Activated CD8-positive, alpha-beta T cell treated with anti-CD3 and anti-CD28 coated beads, Interleukin-2, amount 10 ng/mL, durations not matched to agents 7 days and 5 days (primary cell): ENCODE measurements at regions of chr3 and their contacts with region 1.

Region 1: GRCh38 chr3:51682079-51682478 is 11.0 kb downstream of the TEX264 start:
- DNase-seq: peak; percentile 91
- ATAC-seq: peak; percentile 81
- H3K4me3 Mint-ChIP-seq: peak overlapping the region; percentile 73
- H3K27ac Mint-ChIP-seq: peak overlapping the region; percentile 87
- H3K4me1 Mint-ChIP-seq: peaks cover 96% of the 10 kb centered on the region
- H3K27me3 Mint-ChIP-seq: no peaks in the 10 kb centered on the region

Region 2: DNA sequence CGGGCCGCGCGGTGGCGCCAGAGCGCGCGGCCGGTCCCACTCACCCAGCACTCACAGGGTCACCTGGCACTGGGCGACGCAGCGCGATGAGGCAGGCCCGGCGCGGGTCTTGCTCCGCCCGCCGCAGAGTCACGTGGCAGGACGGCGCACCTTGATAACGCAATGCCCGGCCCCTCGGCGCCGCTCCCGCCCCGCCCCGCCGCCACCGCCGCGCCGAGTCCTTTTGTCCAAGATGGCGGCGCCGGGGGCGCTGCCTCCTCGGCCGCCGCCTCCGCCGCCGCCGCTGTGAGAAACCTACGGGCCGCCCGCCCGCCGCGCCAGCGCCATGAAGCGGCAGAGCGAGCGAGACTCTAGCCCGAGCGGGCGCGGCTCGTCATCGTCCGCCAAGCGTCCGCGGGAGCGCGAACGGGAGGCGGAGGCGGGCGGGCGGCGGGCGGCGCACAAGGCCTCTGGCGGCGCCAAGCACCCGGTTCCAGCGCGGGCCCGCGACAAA is 291.0 kb before region 1 on chr3 and contains the start of gene RBM15B:
- CTCF ChIA-PET with region 1: interaction called, 28 read pairs
- POLR2A ChIA-PET with region 1: interaction called, 6 read pairs
- DNase-seq: peak; percentile 98
- ATAC-seq: peak; percentile 95
- H3K4me3 Mint-ChIP-seq: peak within 1 kb of the TSS; percentile 83
- H3K27ac Mint-ChIP-seq: peak within 1 kb of the TSS; percentile 94
- H3K4me1 Mint-ChIP-seq: peaks cover 79% of the 10 kb centered on the region
- H3K27me3 Mint-ChIP-seq: no peaks in the 10 kb centered on the region
- total RNA-seq, gene RBM15B: 30.7 to 30.8 TPM

Region 3: DNA sequence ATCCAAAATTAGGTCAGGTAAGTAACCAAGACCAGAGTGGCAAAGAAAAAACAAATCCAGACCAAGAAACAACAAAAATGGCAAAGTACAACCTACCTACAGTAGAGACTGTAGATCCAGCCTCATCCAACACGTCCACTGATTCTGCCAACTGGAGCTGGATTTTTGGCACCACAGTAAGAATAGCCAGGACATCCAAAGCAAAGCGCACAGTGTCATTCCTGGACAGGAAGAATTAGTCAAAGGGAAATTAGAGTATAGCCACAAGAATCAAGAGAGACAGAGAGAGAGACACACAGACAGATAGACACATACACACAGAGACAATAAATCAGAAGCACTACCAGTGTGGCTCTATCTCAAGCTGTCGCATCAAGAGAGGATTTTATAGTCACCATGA is 259.9 kb before region 1 on chr3:
- CTCF ChIA-PET with region 1: no interaction called
- POLR2A ChIA-PET with region 1: no interaction called
- DNase-seq: no peak
- ATAC-seq: no peak
- H3K4me3 Mint-ChIP-seq: no peak overlapping the region
- H3K27ac Mint-ChIP-seq: no peak overlapping the region
- H3K4me1 Mint-ChIP-seq: no peaks in the 10 kb centered on the region
- H3K27me3 Mint-ChIP-seq: no peaks in the 10 kb centered on the region

Region 4: GRCh38 chr3:51511000-51511399 is 171.1 kb before region 1 on chr3:
- CTCF ChIA-PET with region 1: interaction called, 15 read pairs
- POLR2A ChIA-PET with region 1: interaction called, 3 read pairs
- DNase-seq: no peak
- ATAC-seq: no peak
- H3K4me3 Mint-ChIP-seq: no peak overlapping the region
- H3K27ac Mint-ChIP-seq: no peak overlapping the region
- H3K4me1 Mint-ChIP-seq: peaks cover 23% of the 10 kb centered on the region
- H3K27me3 Mint-ChIP-seq: no peaks in the 10 kb centered on the region

Region 5: DNA sequence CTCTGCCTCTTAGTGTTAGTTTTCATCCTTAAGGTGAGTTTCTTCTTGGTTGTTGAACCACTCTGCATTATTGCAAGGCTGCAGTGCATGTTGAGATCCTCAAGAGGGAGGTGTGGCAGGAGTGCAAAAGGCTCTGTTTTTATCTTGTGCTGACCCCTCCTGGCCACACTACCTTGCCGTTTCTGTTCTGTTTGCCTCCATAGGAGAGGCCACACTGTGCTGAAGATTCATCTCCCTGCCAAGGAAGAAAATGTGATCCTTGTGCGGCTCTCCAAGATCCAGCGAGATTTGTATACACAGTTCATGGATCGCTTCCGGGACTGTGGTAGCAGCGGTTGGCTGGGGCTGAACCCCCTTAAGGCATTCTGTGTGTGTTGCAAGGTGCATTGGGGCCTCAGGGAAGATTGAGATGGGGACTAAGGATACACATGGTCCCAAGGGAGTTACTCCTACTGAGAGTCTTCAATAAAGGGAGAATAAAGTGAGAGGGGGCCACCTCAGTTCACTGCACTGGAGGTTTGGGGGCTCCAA is 44.1 kb before region 1 on chr3:
- CTCF ChIA-PET with region 1: interaction called, 92 read pairs
- POLR2A ChIA-PET with region 1: no interaction called
- DNase-seq: peak; percentile 69
- ATAC-seq: peak; percentile 82
- H3K4me3 Mint-ChIP-seq: no peak overlapping the region
- H3K27ac Mint-ChIP-seq: no peak overlapping the region
- H3K4me1 Mint-ChIP-seq: no peaks in the 10 kb centered on the region
- H3K27me3 Mint-ChIP-seq: no peaks in the 10 kb centered on the region

Region 6: GRCh38 chr3:51670823-51671733 is 11.0 kb before region 1 on chr3 and contains the start of gene TEX264:
- CTCF ChIA-PET with region 1: interaction called, 206 read pairs
- POLR2A ChIA-PET with region 1: interaction called, 28 read pairs
- DNase-seq: peak; percentile 94
- ATAC-seq: peak; percentile 80
- H3K4me3 Mint-ChIP-seq: peak within 1 kb of the TSS; percentile 88
- H3K27ac Mint-ChIP-seq: peak within 1 kb of the TSS; percentile 85
- H3K4me1 Mint-ChIP-seq: peaks cover 72% of the 10 kb centered on the region
- H3K27me3 Mint-ChIP-seq: no peaks in the 10 kb centered on the region
- total RNA-seq, gene TEX264: 62.6 to 65.0 TPM

Region 7: GRCh38 chr3:51718547-51719409 is 36.7 kb after region 1 on chr3:
- CTCF ChIA-PET with region 1: interaction called, 14 read pairs
- POLR2A ChIA-PET with region 1: no interaction called
- DNase-seq: peak; percentile 86
- ATAC-seq: peak; percentile 86
- H3K4me3 Mint-ChIP-seq: no peak overlapping the region
- H3K27ac Mint-ChIP-seq: peak overlapping the region; percentile 36
- H3K4me1 Mint-ChIP-seq: peaks cover 40% of the 10 kb centered on the region
- H3K27me3 Mint-ChIP-seq: no peaks in the 10 kb centered on the region

Region 8: DNA sequence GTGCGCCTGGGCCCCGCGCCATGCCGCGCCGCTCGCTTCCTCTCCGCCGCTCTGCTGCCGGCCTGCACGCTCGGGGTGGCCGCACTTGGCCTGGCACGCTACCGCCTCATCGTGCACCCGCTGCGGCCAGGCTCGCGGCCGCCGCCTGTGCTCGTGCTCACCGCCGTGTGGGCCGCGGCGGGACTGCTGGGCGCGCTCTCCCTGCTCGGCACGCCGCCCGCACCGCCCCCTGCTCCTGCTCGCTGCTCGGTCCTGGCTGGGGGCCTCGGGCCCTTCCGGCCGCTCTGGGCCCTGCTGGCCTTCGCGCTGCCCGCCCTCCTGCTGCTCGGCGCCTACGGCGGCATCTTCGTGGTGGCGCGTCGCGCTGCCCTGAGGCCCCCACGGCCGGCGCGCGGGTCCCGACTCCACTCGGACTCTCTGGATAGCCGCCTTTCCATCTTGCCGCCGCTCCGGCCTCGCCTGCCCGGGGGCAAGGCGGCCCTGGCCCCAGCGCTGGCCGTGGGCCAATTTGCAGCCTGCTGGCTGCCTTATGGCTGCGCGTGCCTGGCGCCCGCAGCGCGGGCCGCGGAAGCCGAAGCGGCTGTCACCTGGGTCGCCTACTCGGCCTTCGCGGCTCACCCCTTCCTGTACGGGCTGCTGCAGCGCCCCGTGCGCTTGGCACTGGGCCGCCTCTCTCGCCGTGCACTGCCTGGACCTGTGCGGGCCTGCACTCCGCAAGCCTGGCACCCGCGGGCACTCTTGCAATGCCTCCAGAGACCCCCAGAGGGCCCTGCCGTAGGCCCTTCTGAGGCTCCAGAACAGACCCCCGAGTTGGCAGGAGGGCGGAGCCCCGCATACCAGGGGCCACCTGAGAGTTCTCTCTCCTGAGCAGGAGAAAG is 274.1 kb after region 1 on chr3:
- CTCF ChIA-PET with region 1: no interaction called
- POLR2A ChIA-PET with region 1: no interaction called
- DNase-seq: peak; percentile 38
- ATAC-seq: peak; percentile 70
- H3K4me3 Mint-ChIP-seq: no peak overlapping the region
- H3K27ac Mint-ChIP-seq: no peak overlapping the region
- H3K4me1 Mint-ChIP-seq: peaks cover 13% of the 10 kb centered on the region
- H3K27me3 Mint-ChIP-seq: peaks cover 43% of the 10 kb centered on the region